ENCODE measurements at regions of chr10 and their contacts with region 1.

Region 1: DNA sequence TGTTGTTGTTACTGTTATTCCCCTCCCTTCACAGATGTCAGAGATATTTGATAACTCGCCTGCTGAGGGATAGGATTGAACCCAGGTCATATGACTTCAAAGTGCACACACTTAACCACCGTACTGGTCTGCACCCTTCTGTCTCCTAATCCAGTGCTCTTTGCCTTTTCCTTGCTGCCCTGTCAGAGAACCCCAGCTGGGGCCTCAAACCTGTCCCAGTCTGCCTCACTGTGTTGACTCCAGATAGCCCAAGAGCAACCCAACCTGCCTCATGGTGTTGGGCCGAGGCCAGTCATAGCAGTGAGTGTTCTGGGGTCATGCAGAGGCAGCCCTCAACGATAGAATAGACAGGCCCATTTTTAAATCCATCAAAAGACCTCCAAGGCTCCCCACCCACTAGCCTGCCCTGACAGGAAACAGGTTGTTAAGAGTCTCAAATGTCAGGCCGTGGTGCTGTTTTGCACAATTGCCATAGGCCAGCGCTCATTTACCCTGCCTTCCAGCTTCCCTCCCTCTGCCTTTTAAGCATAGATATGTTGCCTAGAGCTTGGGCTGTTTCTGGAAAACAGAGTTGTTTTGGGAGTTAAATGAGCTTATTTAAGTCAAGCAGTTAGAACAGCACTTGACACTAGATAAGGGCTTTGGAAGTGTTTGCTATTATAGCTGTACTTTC is 37.0 kb upstream of the PDCD4 start:
- DNase-seq: peak; percentile 33 to 77
- H3K4me3 ChIP-seq: no peak overlapping the region
- H3K27ac ChIP-seq: peak overlapping the region; percentile 78 to 82
- H3K4me1 ChIP-seq: peaks cover 14 to 40% of the 10 kb centered on the region in 2 donors
- H3K27me3 ChIP-seq: no peaks in the 10 kb centered on the region
- CTCF ChIP-seq: no peak

Region 2: GRCh38 chr10:110864662-110865140 is 29.9 kb after region 1 on chr10:
- intact Hi-C with region 1: loop called (anchors 2 kb)
- DNase-seq: no peak
- H3K4me3 ChIP-seq: peak overlapping the region; percentile 0 to 11
- H3K27ac ChIP-seq: peak overlapping the region; percentile 75 to 79
- H3K4me1 ChIP-seq: peaks cover 16 to 38% of the 10 kb centered on the region in 2 donors
- H3K27me3 ChIP-seq: no peaks in the 10 kb centered on the region
- CTCF ChIP-seq: no peak